ENCODE measurements at regions of chr10 and their contacts with region 1.

Region 1: GRCh38 chr10:74189999-74190421 is 39.0 kb downstream of the ADK start:
- DNase-seq: no peak
- ATAC-seq: peak; percentile 86
- H3K4me3 Mint-ChIP-seq: peak overlapping the region; percentile 46
- H3K27ac Mint-ChIP-seq: peak overlapping the region; percentile 87
- H3K4me1 Mint-ChIP-seq: peaks cover 37% of the 10 kb centered on the region
- H3K27me3 Mint-ChIP-seq: no peaks in the 10 kb centered on the region

Region 2: GRCh38 chr10:74177140-74177677 is 12.8 kb before region 1 on chr10:
- POLR2A ChIA-PET with region 1: interaction called, 11 read pairs
- DNase-seq: no peak
- ATAC-seq: no peak
- H3K4me3 Mint-ChIP-seq: peak overlapping the region; percentile 92
- H3K27ac Mint-ChIP-seq: peak overlapping the region; percentile 94
- H3K4me1 Mint-ChIP-seq: peaks cover 35% of the 10 kb centered on the region
- H3K27me3 Mint-ChIP-seq: no peaks in the 10 kb centered on the region

Region 3: GRCh38 chr10:74206746-74207145 is 16.7 kb after region 1 on chr10:
- POLR2A ChIA-PET with region 1: no interaction called
- DNase-seq: no peak
- ATAC-seq: no peak
- H3K4me3 Mint-ChIP-seq: no peak overlapping the region
- H3K27ac Mint-ChIP-seq: no peak overlapping the region
- H3K4me1 Mint-ChIP-seq: no peaks in the 10 kb centered on the region
- H3K27me3 Mint-ChIP-seq: no peaks in the 10 kb centered on the region